HEK293T (cell line): ENCODE measurements at regions of chr2 and their contacts with region 1.

Region 1: DNA sequence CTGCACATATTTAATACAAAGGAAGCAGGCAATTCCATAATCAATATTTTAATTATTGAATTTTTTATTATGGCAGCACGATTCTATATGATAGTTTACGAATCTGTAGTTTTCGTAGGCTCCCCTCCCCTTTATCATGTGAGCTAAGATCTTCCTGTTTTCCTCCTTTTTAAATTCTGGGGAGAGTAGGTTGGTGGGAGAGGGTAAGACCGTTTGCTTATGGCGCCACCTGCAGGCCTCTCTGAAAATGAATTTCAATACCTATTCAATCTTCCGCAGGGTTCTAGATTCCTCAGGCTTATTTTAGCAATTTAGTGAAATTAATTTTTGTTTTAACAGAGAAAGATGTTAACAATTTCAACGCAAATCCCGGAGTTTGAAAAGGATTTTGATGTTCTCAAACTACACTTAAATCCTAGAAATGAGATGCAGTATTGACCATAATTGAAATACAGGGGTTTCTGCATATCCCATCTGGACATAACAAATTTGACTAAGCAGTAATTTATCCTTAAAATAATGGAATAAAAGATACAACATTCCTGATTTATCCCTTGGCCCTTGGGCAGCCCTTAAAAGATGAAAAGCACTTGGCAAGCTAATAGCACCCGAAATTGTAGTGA is 12.8 kb upstream of the GBX2 start:
- DNase-seq: peak; percentile 61

Region 2: DNA sequence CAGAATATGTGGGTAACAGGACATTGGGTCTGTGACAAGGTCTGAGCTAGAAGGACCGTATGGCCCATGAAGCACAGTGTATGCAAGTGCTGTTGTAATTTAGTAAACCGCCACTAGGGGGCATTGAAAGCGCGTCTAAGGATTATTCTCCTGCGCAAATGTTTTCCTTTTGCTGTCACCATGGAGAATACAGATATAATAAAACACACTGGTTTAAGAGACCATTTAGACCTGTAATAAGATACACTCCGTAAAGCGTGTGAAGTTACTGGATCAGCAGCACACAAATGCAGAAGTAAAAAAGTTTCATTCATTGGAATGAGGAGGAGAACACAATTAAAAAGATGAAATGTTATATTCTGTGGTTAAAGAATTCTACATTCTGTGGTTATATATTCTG is 414.7 kb before region 1 on chr2:
- CTCF ChIA-PET with region 1: interaction called, 12 read pairs
- POLR2A ChIA-PET with region 1: interaction called, 6 read pairs
- DNase-seq: peak; percentile 65

Region 3: DNA sequence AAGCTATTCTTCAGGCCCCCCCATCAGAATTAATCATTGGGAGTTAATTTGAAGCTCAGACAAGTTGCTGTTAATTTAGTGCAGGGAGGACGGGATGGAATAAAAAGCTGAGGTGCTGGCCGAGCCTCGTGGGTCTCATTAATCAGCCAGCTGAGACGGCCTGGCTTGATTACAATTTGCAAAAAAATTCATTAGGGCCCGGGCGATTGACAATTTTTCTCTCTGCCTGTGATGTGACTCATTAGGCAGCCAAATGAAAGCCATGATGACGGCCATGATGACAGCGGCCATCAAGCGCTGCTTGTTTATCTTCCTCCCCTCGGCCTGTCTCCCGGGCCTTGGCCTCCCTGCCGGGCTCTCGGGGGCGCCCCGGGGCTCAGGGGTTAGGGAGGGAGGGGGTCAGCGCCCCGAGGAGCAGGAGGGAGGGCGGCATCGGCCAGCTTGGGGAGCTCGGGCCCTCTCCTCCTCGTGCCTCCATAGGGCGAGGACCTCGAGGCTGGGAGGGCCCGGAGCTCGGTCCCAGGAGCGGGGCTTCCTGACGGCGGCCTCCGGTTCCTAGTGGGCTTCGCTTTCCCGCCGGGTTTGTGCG is 18.0 kb before region 1 on chr2:
- CTCF ChIA-PET with region 1: no interaction called
- POLR2A ChIA-PET with region 1: no interaction called
- DNase-seq: no peak

Region 4: DNA sequence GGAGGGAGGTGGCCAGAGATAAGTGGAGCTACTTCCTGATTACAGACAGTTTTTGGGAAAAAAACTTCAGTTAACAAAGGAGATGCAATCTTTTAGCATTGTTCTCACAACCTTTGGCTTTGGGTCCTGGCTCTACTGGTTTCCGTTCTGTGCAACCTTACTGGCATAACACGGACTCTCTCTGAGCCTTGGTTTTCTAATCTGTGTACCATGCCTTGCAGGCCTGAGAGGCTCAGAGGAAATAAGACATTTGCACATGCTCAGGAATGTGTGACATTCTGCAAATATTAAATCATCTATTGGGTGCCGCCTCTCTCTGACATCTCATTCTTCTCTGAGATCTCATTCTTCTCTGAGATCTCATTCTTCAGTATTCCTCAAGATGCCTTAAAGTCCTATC is 43.6 kb after region 1 on chr2:
- CTCF ChIA-PET with region 1: no interaction called
- POLR2A ChIA-PET with region 1: no interaction called
- DNase-seq: no peak

Region 5: GRCh38 chr2:236235185-236235584 is 54.2 kb after region 1 on chr2:
- CTCF ChIA-PET with region 1: no interaction called
- POLR2A ChIA-PET with region 1: no interaction called
- DNase-seq: no peak

Region 6: DNA sequence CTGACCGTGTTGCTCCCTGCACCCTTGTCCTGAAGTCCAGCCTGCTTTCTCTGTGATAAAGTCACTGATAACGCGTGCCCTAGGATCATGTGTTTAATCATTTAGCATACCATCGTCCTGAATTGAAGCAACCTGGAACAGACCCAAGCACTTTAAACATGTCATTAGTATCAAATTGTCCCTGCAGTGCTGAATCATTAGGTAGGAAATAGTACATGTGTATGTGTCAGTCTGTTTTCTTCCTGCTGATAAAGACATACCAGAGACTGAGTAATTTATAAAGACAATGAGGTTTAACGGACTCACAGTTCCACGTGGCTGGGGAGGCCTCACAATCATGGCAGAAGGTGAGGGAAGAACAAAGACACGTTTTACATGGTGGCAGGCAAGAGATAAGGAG is 80.5 kb after region 1 on chr2:
- CTCF ChIA-PET with region 1: no interaction called
- POLR2A ChIA-PET with region 1: no interaction called
- DNase-seq: no peak